ENCODE measurements at regions of chr2 and their contacts with region 1.

Region 1: DNA sequence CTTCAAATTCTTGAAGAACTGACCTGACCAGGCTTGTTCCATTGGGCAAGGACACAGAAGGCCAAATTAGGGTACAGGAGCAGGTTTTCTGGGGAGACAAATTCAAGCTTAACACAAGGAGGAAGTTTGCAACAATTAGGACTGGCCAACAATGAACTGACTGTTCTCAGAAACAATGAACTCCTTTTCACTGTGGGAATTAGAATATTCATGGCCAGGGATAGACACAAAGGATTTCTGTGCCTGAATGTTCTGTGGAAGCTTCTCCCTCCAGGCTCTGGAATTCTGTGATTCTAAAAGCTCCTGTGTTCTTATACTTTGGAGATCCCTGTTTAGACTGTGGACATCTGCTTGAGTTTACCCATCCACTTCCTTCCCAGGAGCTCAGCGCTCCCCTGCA is 15.2 kb downstream of the SMYD1 start:
- DNase-seq: no peak
- ATAC-seq: no peak
- H3K4me3 ChIP-seq: no peak overlapping the region
- H3K27ac ChIP-seq: no peak overlapping the region
- H3K4me1 ChIP-seq: no peaks in the 10 kb centered on the region
- H3K27me3 ChIP-seq: peaks cover 0 to 2% of the 10 kb centered on the region in 2 experiments; a peak in 1 of 4 replicates
- CTCF ChIP-seq: no peak
- EP300 ChIP-seq: no peak
- POLR2A ChIP-seq: no peak
- RAD21 ChIP-seq: no peak

Region 2: DNA sequence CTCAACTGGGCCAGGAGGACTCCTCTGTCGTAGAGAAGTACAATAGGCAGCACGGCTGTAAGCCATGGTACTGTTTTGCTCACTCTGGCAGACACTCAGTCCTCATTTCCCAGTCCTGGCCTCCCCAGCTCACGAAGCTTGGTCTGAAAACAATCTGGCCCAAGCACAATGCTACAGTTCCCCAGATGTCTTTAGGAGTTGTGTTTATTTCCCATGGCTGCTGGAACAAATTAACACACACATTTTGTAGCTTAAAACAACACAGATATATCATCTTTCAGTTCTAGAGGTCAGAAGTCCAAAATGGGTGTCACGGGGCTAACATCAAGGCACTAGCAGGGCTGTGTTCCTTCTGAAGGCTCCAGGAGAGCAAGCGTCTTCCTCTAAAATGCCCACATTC is 32.1 kb after region 1 on chr2:
- CTCF ChIA-PET with region 1: no interaction called
- POLR2A ChIA-PET with region 1: no interaction called
- RAD21 ChIA-PET with region 1: no interaction called
- SMC1A ChIA-PET with region 1: no interaction called
- in situ Hi-C with region 1: no loop called
- intact Hi-C with region 1: no loop called
- DNase-seq: no peak
- ATAC-seq: no peak
- H3K4me3 ChIP-seq: no peak overlapping the region
- H3K27ac ChIP-seq: no peak overlapping the region
- H3K4me1 ChIP-seq: no peaks in the 10 kb centered on the region
- H3K27me3 ChIP-seq: peaks cover 0 to 1% of the 10 kb centered on the region in 2 experiments; a peak in 2 of 4 replicates
- CTCF ChIP-seq: no peak
- EP300 ChIP-seq: no peak
- POLR2A ChIP-seq: no peak
- RAD21 ChIP-seq: no peak

Region 3: DNA sequence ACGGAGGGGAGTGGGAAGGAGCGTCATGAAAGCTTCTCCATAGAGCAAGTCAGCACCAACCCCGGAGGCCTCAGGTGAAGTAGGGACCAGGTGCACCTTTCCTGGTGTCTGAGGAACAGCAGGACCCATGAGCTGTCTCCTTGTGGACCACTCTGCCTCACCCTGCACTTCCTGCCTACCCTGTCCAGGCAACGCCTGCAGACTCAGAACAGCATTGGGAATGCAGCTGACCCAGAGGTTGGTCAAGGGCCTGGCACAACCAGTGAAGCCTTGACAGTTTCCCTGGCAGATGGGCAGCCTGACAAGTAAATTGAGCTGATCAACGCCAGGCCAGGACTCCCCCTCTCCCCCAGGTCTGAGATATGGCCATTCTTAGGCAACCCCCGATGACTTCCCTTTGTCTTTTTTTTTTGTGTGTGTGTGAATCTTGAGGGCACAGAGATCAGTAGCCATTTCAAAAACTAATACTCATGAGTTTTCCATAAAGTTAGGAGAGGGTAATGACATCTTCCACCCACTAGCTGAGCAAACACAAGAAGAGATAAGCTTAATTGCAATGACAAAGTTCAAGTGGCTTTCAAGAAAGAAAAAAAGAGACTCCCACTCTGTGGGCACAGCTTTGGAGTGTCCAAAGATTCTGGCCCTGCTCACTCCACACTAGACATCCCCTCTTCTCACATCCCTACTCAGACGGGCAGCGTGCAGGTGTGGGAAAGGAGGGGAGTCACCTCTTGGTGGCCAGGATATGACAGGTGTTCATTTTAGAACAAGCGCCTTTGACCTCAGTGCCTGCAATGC is 48.6 kb after region 1 on chr2:
- CTCF ChIA-PET with region 1: no interaction called
- POLR2A ChIA-PET with region 1: no interaction called
- RAD21 ChIA-PET with region 1: no interaction called
- SMC1A ChIA-PET with region 1: no interaction called
- in situ Hi-C with region 1: no loop called
- intact Hi-C with region 1: no loop called
- DNase-seq: no peak
- ATAC-seq: no peak
- H3K4me3 ChIP-seq: no peak overlapping the region
- H3K27ac ChIP-seq: no peak overlapping the region
- H3K4me1 ChIP-seq: no peaks in the 10 kb centered on the region
- H3K27me3 ChIP-seq: no peaks in the 10 kb centered on the region; a peak in 1 of 4 replicates
- CTCF ChIP-seq: no peak
- EP300 ChIP-seq: no peak
- POLR2A ChIP-seq: no peak
- RAD21 ChIP-seq: no peak

Region 4: DNA sequence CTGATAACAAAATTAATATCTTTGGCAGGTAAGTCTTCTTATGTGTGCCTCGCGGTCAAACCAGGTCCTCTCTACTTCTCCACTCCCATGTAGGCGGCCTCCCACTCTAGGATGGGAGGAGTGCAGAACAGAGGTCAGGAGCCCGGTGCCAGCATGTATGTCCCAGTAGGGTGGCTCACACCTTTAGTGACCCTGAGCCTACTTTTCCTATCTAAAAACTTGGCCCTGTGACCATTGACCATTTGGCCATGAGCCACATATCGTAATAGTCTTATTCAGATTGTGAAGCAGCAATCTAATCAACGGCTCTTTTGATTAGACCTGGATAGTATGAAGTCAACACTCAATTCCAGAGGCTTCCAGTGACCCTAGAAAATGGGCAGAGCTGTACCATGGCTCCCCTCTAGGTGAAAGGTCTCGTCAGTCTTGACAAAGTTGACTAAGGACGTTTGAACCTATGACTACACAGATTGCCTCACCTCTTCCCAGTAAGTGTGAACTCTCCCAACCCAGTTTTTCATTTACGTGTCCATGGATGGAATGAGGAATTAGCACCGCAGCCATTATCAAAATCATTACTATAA is 62.2 kb after region 1 on chr2:
- CTCF ChIA-PET with region 1: no interaction called
- POLR2A ChIA-PET with region 1: no interaction called
- RAD21 ChIA-PET with region 1: no interaction called
- SMC1A ChIA-PET with region 1: no interaction called
- in situ Hi-C with region 1: no loop called
- intact Hi-C with region 1: loop called (anchors 5 kb)
- DNase-seq: no peak
- ATAC-seq: no peak
- H3K4me3 ChIP-seq: no peak overlapping the region
- H3K27ac ChIP-seq: no peak overlapping the region
- H3K4me1 ChIP-seq: no peaks in the 10 kb centered on the region
- H3K27me3 ChIP-seq: 0 out of 4 replicates have a peak, but pooled peaks cover 0 to 2% of the 10 kb centered on the region in 2 experiments
- CTCF ChIP-seq: no peak
- EP300 ChIP-seq: no peak
- POLR2A ChIP-seq: no peak
- RAD21 ChIP-seq: no peak

Region 5: GRCh38 chr2:88398180-88398579 is 315.4 kb after region 1 on chr2:
- CTCF ChIA-PET with region 1: no interaction called
- POLR2A ChIA-PET with region 1: no interaction called
- RAD21 ChIA-PET with region 1: no interaction called
- SMC1A ChIA-PET with region 1: no interaction called
- in situ Hi-C with region 1: no loop called
- intact Hi-C with region 1: no loop called
- DNase-seq: no peak
- ATAC-seq: no peak
- H3K4me3 ChIP-seq: no peak overlapping the region
- H3K27ac ChIP-seq: no peak overlapping the region
- H3K4me1 ChIP-seq: no peaks in the 10 kb centered on the region
- H3K27me3 ChIP-seq: no peaks in the 10 kb centered on the region
- CTCF ChIP-seq: no peak
- EP300 ChIP-seq: no peak
- POLR2A ChIP-seq: no peak
- RAD21 ChIP-seq: no peak